ENCODE measurements at regions of chr15 and their contacts with region 1.

Region 1: DNA sequence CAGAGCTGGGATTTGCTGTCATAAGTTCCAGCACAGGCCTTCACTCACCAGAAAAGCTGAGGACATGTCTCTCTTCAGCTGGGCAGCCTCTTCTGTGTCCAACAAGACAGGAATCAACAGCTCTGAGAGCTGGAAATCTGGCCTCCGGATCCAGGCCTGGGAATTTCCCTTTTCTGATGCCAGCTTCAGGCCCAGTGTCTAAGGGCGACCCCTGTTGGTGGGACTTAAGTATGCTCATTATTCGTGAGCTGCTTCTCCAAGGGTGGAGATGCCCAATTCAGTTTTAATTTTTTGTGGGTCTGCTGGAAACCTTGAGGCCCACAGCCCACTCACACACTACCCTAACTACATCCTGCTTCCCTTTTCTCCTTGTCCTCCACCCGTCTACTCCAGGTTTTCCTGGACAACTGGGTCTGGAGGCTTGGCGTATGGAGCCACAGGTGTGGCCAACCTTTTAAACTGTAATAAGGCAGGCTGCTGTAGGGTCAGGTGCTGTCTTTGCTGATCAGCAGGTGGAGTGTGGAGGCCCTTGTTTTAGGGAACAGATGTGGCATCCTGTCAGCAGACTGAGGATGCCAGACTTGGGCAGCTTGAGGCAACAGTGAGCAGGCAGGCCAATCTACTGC is 2.6 kb upstream of the CEMIP start:
- DNase-seq: peak; percentile 36 to 83
- H3K4me3 ChIP-seq: no peak overlapping the region
- H3K27ac ChIP-seq: no peak overlapping the region
- H3K4me1 ChIP-seq: peaks cover 0 to 7% (median 4%) of the 10 kb centered on the region in 4 experiments; a peak in 5 of 7 replicates
- H3K27me3 ChIP-seq: peaks cover 4 to 40% (median 33%) of the 10 kb centered on the region in 4 experiments
- CTCF ChIP-seq: peak; percentile 76 to 89 (median 88)
- EP300 ChIP-seq: no peak
- POLR2A ChIP-seq: no peak
- RAD21 ChIP-seq: peak; percentile 93

Region 2: GRCh38 chr15:80455668-80456442 is 320.7 kb before region 1 on chr15:
- CTCF ChIA-PET with region 1: interaction called, 119 read pairs
- POLR2A ChIA-PET with region 1: no interaction called
- DNase-seq: peak in 1 of 2 experiments; percentile 61
- H3K4me3 ChIP-seq: no peak overlapping the region
- H3K27ac ChIP-seq: no peak overlapping the region
- H3K4me1 ChIP-seq: peaks cover 0 to 9% (median 4%) of the 10 kb centered on the region in 4 experiments; a peak in 4 of 7 replicates
- H3K27me3 ChIP-seq: peaks cover 0 to 2% (median 0%) of the 10 kb centered on the region in 4 experiments; a peak in 1 of 7 replicates
- CTCF ChIP-seq: peak; percentile 90 to 94 (median 91)
- EP300 ChIP-seq: no peak
- POLR2A ChIP-seq: no peak
- RAD21 ChIP-seq: peak; percentile 97

Region 3: GRCh38 chr15:80596521-80596976 is 180.0 kb before region 1 on chr15:
- CTCF ChIA-PET with region 1: interaction called, 13 read pairs
- POLR2A ChIA-PET with region 1: no interaction called
- DNase-seq: no peak
- H3K4me3 ChIP-seq: no peak overlapping the region
- H3K27ac ChIP-seq: no peak overlapping the region
- H3K4me1 ChIP-seq: no peaks in the 10 kb centered on the region
- H3K27me3 ChIP-seq: no peaks in the 10 kb centered on the region
- CTCF ChIP-seq: no peak
- EP300 ChIP-seq: no peak
- POLR2A ChIP-seq: no peak
- RAD21 ChIP-seq: no peak

Region 4: GRCh38 chr15:80636675-80637074 is 139.9 kb before region 1 on chr15:
- CTCF ChIA-PET with region 1: interaction called, 16 read pairs
- POLR2A ChIA-PET with region 1: no interaction called
- DNase-seq: peak in 1 of 2 experiments; percentile 31
- H3K4me3 ChIP-seq: no peak overlapping the region
- H3K27ac ChIP-seq: no peak overlapping the region
- H3K4me1 ChIP-seq: no peaks in the 10 kb centered on the region; a peak in 1 of 7 replicates
- H3K27me3 ChIP-seq: no peaks in the 10 kb centered on the region
- CTCF ChIP-seq: peak; percentile 0 to 59 (median 38); a peak in 3 of 4 replicates
- EP300 ChIP-seq: no peak
- POLR2A ChIP-seq: no peak
- RAD21 ChIP-seq: peak; percentile 33 to 50; a peak in 3 of 4 replicates

Region 5: DNA sequence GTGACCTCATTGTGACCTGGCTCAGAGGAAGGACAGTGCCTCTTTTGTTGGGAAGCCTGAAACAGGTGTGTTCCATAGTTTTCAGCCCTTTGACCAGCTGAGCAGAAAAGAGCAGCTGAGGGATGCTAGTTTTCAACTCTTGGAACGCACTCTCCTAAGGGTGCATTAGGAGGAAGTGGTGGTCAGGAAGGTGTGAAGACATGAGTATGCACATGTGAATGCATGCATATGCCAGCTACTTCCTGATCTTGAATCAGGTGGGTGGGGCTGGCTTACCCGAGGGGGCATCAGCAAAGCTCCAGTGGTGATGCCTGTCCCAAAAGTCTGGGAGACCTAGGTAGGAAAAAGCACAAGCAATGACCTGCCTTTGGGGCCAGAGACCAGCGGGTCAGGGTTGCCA is 20.6 kb before region 1 on chr15:
- CTCF ChIA-PET with region 1: interaction called, 13 read pairs
- POLR2A ChIA-PET with region 1: no interaction called
- DNase-seq: peak in 1 of 2 experiments; percentile 42
- H3K4me3 ChIP-seq: no peak overlapping the region
- H3K27ac ChIP-seq: no peak overlapping the region
- H3K4me1 ChIP-seq: peaks cover 0 to 9% (median 0%) of the 10 kb centered on the region in 4 experiments; a peak in 1 of 7 replicates
- H3K27me3 ChIP-seq: no peaks in the 10 kb centered on the region
- CTCF ChIP-seq: no peak
- EP300 ChIP-seq: no peak
- POLR2A ChIP-seq: no peak
- RAD21 ChIP-seq: no peak

Region 6: DNA sequence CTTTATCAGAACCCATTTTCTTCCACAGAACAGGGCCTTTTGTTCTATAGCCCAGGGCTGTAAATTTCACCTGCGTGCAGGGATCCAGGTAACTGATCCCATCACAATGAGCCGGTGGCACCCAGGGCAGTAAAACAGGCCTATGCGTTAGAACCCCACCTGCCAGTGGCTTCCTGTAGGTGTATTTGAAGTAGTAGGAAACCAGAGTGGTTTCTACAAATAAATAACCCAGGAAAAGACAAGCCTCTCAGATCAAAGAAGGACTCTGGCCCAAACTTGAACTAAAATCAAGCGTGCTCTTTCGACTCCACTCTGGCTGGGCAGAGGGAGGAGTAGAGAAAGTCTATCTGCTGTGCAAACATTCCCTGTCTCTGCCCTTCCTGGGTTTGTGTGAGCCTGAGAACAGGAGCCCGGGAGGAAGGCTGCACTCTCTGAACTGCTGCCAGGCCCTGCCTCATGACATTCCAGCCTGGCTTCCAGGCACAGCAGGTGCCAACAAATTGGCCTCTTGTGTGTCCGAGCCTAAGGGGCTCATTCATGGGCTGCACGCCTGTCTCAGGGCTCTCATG is 80.4 kb after region 1 on chr15:
- CTCF ChIA-PET with region 1: interaction called, 28 read pairs
- POLR2A ChIA-PET with region 1: no interaction called
- DNase-seq: no peak
- H3K4me3 ChIP-seq: no peak overlapping the region
- H3K27ac ChIP-seq: no peak overlapping the region
- H3K4me1 ChIP-seq: peaks cover 0 to 6% (median 1%) of the 10 kb centered on the region in 4 experiments; a peak in 2 of 7 replicates
- H3K27me3 ChIP-seq: no peaks in the 10 kb centered on the region; a peak in 1 of 7 replicates
- CTCF ChIP-seq: no peak
- EP300 ChIP-seq: no peak
- POLR2A ChIP-seq: no peak
- RAD21 ChIP-seq: no peak

Region 7: GRCh38 chr15:80970018-80970658 is 193.6 kb after region 1 on chr15:
- CTCF ChIA-PET with region 1: interaction called, 94 read pairs
- POLR2A ChIA-PET with region 1: no interaction called
- DNase-seq: peak in 1 of 2 experiments; percentile 78
- H3K4me3 ChIP-seq: no peak overlapping the region
- H3K27ac ChIP-seq: no peak overlapping the region
- H3K4me1 ChIP-seq: peaks cover 13 to 30% (median 21%) of the 10 kb centered on the region in 4 experiments
- H3K27me3 ChIP-seq: no peaks in the 10 kb centered on the region
- CTCF ChIP-seq: peak; percentile 66 to 74 (median 71)
- EP300 ChIP-seq: no peak
- POLR2A ChIP-seq: no peak
- RAD21 ChIP-seq: peak; percentile 91 to 92

Measured in H1 (cell line).